ENCODE measurements at regions of chr14 and their contacts with region 1.

Region 1: GRCh38 chr14:55270832-55271565 is at the start of gene FBXO34:
- DNase-seq: peak; percentile 59
- H3K4me3 ChIP-seq: peak within 1 kb of the TSS; percentile 95
- CTCF ChIP-seq: peak; percentile 100

Region 2: GRCh38 chr14:54974788-54975414 is 296.1 kb before region 1 on chr14:
- CTCF ChIA-PET with region 1: no interaction called
- POLR2A ChIA-PET with region 1: no interaction called
- DNase-seq: no peak
- H3K4me3 ChIP-seq: no peak overlapping the region
- CTCF ChIP-seq: no peak

Region 3: GRCh38 chr14:55117803-55118441 is 153.1 kb before region 1 on chr14:
- CTCF ChIA-PET with region 1: no interaction called
- POLR2A ChIA-PET with region 1: no interaction called
- DNase-seq: no peak
- H3K4me3 ChIP-seq: no peak overlapping the region
- CTCF ChIP-seq: no peak

Region 4: DNA sequence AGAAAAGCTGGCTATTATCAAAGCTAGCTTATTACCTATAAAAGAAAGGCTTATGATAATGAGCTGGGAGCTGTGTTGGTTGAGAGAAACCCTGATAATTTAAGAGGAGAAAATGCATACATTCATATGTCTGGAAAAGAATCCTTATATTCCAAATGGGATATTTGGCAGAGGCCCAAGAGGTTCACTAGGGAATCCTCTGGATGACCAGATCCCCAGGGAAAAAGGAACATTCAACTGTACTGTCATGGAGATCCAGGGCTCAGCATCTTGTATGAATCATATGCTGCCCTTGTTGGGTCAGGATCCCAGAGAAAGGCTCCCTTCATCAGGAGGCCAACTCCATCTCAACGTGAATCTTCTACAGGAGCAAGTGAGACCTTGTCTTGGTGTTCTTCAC is 16.4 kb before region 1 on chr14:
- CTCF ChIA-PET with region 1: interaction called, 120 read pairs
- POLR2A ChIA-PET with region 1: no interaction called
- DNase-seq: no peak
- H3K4me3 ChIP-seq: no peak overlapping the region
- CTCF ChIP-seq: no peak

Region 5: GRCh38 chr14:55354500-55354899 is 83.5 kb after region 1 on chr14:
- CTCF ChIA-PET with region 1: interaction called, 77 read pairs
- POLR2A ChIA-PET with region 1: interaction called, 3 read pairs
- DNase-seq: no peak
- H3K4me3 ChIP-seq: no peak overlapping the region
- CTCF ChIP-seq: peak; percentile 49

Region 6: GRCh38 chr14:55411426-55412389 is 140.7 kb after region 1 on chr14 and contains the start of gene ATG14:
- CTCF ChIA-PET with region 1: interaction called, 11 read pairs
- POLR2A ChIA-PET with region 1: no interaction called
- DNase-seq: peak; percentile 16
- H3K4me3 ChIP-seq: peak within 1 kb of the TSS; percentile 88
- CTCF ChIP-seq: no peak

Measured in AG04449 (cell line).